Activated CD4-positive, alpha-beta T cell treated with anti-CD3 and anti-CD28 coated beads for 36 hours (primary cell): ENCODE measurements at regions of chr1 and their contacts with region 1.

Region 1: GRCh38 chr1:106621853-106622252 is 434.6 kb upstream of the PRMT6 start:
- DNase-seq: no peak
- ATAC-seq: no peak
- H3K4me3 Mint-ChIP-seq: no peak overlapping the region
- H3K27ac Mint-ChIP-seq: no peak overlapping the region
- H3K4me1 Mint-ChIP-seq: no peaks in the 10 kb centered on the region
- H3K27me3 Mint-ChIP-seq: no peaks in the 10 kb centered on the region

Region 2: DNA sequence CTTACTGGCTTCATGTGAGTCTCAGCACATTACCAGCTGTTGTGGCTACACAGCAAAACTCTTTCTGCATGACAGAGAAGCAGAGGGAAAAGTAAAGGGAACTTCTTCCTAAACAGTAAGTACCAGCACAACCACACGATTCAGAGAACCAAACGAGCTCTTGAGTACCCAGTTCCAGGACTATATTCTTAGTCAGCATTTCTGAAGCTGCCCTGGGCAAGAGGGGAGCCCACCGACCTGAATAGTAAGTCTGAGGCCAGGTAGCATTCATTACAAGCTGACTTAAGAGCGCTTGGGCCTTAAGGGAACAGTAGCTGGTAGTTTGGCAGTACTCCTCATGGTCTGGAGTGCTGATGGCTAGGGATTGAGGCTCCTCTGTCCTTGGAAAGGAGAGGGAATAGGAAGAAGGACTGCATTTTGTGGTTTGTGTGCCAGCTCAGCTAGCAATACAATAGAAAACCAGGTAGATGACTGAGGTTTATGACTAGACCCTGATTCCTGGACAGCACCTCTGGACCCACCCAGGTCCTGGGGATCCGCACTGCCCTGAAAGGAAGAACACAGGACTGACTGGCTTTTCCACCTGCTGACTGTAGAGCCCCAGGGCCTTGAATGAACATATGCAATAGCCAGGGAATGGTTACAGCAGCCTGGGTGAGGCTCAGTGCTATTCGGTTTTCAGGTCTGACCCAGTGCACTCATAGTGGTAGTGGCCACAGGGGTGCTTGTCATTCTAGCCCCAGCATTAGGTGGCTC is 37.8 kb after region 1 on chr1:
- CTCF ChIA-PET with region 1: no interaction called
- POLR2A ChIA-PET with region 1: no interaction called
- intact Hi-C with region 1: loop called in 1 of 2 experiments (anchors 1 kb)
- DNase-seq: no peak
- ATAC-seq: no peak
- H3K4me3 Mint-ChIP-seq: no peak overlapping the region
- H3K27ac Mint-ChIP-seq: no peak overlapping the region
- H3K4me1 Mint-ChIP-seq: no peaks in the 10 kb centered on the region
- H3K27me3 Mint-ChIP-seq: no peaks in the 10 kb centered on the region